ENCODE measurements at regions of chr5 and their contacts with region 1.

Region 1: GRCh38 chr5:158060155-158060554 is 201.2 kb upstream of the CLINT1 start:
- DNase-seq: peak; percentile 84
- H3K27ac ChIP-seq: no peak overlapping the region
- CTCF ChIP-seq: no peak

Region 2: GRCh38 chr5:158074992-158075769 is 15.0 kb after region 1 on chr5:
- CTCF ChIA-PET with region 1: interaction called, 11 read pairs
- POLR2A ChIA-PET with region 1: no interaction called
- DNase-seq: peak; percentile 83
- H3K27ac ChIP-seq: no peak overlapping the region
- CTCF ChIP-seq: peak; percentile 94

Region 3: DNA sequence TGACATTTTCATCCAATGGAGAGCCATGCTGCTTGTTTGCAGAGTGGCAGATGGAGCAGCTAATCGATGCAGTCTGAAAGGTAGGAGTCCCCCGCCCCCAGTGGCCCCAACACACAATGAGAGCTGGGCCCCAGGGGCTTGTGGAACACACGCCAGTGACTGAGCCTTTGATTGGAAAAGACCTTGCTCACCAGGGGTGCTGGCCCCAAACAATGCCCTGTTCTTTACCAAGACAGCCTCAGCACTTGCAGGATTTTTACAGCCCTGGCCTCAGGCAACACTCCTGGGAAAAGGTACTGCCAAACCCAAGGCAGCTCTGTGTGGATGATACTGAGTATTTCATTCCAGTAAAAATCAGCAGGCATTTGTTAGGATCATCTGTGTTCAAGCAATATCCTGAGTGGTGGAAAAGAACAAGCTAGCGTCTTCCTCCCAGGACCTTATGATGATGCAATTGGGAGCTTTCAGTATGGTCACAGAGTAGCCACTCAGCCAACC is 75.6 kb after region 1 on chr5:
- CTCF ChIA-PET with region 1: no interaction called
- POLR2A ChIA-PET with region 1: no interaction called
- DNase-seq: no peak
- H3K27ac ChIP-seq: no peak overlapping the region
- CTCF ChIP-seq: no peak

Measured in RWPE1 (cell line).